ENCODE measurements at regions of chr1 and their contacts with region 1.

Region 1: DNA sequence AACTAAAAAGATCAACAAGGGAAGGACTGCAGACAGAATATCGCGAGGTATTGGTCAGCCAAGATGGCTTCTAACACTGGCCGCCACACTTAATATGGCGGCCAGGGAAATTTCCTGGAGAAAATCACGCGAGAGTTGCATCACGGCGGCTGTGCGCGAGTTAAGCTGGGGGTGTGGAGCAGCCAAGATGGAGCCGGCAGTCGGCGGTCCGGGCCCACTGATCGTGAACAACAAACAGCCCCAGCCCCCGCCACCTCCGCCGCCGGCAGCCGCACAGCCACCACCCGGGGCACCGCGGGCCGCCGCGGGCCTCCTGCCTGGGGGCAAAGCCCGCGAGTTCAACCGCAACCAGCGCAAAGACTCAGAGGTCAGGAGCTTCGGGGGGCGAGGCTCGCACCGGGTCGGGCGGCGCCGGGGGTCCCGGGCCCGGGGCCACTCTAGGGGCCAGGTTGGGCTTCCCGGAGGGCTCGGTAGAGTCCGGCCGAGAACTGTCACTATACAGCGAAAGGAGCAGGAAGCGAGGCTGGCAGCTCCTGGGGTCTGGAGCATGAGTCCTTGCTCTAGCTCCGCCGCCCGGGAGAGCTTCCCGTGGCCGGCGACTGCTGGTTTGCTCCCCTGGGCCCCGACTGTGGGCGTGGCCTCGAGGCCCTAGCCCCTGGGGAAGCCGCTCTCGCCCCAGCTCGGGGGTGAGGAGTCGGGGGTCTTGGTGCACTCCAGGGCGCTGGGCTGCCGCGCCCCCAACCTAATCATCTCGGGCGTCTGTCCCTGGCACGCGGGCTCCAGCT is at the start of gene STRIP1:
- DNase-seq: peak; percentile 78 to 96 (median 93)
- ATAC-seq: peak; percentile 97
- H3K4me3 ChIP-seq: peak within 1 kb of the TSS; percentile 48
- H3K4me3 Mint-ChIP-seq: peak within 1 kb of the TSS; percentile 92 to 98 (median 95)
- H3K27ac ChIP-seq: peak within 1 kb of the TSS; percentile 97
- H3K27ac Mint-ChIP-seq: peak within 1 kb of the TSS; percentile 81 to 98 (median 95)
- H3K4me1 ChIP-seq: peaks cover 31% of the 10 kb centered on the region in 2 donors
- H3K4me1 Mint-ChIP-seq: peaks cover 32 to 70% (median 57%) of the 10 kb centered on the region in 7 donors
- H3K27me3 ChIP-seq: no peaks in the 10 kb centered on the region
- H3K27me3 Mint-ChIP-seq: no peaks in the 10 kb centered on the region
- total RNA-seq, gene STRIP1: 42.4 to 83.9 (median 70.7) TPM

Region 2: GRCh38 chr1:109041621-109042468 is 992.8 kb before region 1 on chr1 and contains the start of gene WDR47:
- CTCF ChIA-PET with region 1: no interaction called
- POLR2A ChIA-PET with region 1: no interaction called
- intact Hi-C with region 1: loop called in 1 of 2 experiments (anchors 2 kb)
- DNase-seq: peak; percentile 95 to 97 (median 96)
- ATAC-seq: peak; percentile 99
- H3K4me3 ChIP-seq: peak within 1 kb of the TSS; percentile 97
- H3K4me3 Mint-ChIP-seq: peak within 1 kb of the TSS; percentile 86 to 97 (median 94)
- H3K27ac ChIP-seq: peak within 1 kb of the TSS; percentile 90
- H3K27ac Mint-ChIP-seq: peak within 1 kb of the TSS; percentile 78 to 97 (median 91)
- H3K4me1 ChIP-seq: peaks cover 0 to 7% of the 10 kb centered on the region in 2 donors
- H3K4me1 Mint-ChIP-seq: peaks cover 7 to 25% (median 16%) of the 10 kb centered on the region in 7 donors
- H3K27me3 ChIP-seq: no peaks in the 10 kb centered on the region
- H3K27me3 Mint-ChIP-seq: peaks cover 0 to 7% (median 0%) of the 10 kb centered on the region in 5 donors
- total RNA-seq, gene WDR47: 9.8 to 15.4 (median 14.4) TPM

Region 3: GRCh38 chr1:109493805-109494539 is 540.7 kb before region 1 on chr1 and contains the start of gene CYB561D1:
- CTCF ChIA-PET with region 1: no interaction called
- POLR2A ChIA-PET with region 1: no interaction called
- intact Hi-C with region 1: loop called in 1 of 2 experiments (anchors 2 kb)
- DNase-seq: peak; percentile 83 to 97 (median 91)
- ATAC-seq: peak; percentile 96
- H3K4me3 ChIP-seq: peak within 1 kb of the TSS; percentile 96
- H3K4me3 Mint-ChIP-seq: peak within 1 kb of the TSS; percentile 90 to 98 (median 94)
- H3K27ac ChIP-seq: peak within 1 kb of the TSS; percentile 72
- H3K27ac Mint-ChIP-seq: peak within 1 kb of the TSS; percentile 84 to 98 (median 92)
- H3K4me1 ChIP-seq: peaks cover 31 to 59% of the 10 kb centered on the region in 2 donors
- H3K4me1 Mint-ChIP-seq: peaks cover 40 to 59% (median 53%) of the 10 kb centered on the region in 7 donors
- H3K27me3 ChIP-seq: no peaks in the 10 kb centered on the region
- H3K27me3 Mint-ChIP-seq: no peaks in the 10 kb centered on the region
- total RNA-seq, gene CYB561D1: 19.6 to 41.5 (median 24.1) TPM

Region 4: DNA sequence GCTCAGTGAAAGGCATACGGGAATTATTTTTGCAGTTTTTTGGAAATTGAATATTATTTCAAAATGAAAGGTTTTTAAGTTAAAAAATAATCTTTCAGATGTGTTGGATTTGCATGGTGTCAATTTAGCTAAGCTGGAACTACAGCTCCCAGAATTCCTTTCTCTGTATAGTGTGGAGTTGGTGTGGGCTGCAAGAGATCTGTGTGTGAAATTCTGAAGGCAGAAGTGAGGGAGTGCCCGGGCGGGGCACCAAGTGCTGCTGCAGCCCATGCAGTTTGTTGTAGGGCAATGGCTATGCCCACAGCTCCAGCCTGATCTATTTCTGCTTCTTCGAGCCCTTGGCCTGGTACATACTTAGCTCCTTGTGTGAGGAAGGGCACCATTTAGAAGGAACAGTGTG is 184.4 kb before region 1 on chr1:
- CTCF ChIA-PET with region 1: no interaction called
- POLR2A ChIA-PET with region 1: no interaction called
- intact Hi-C with region 1: no loop called
- DNase-seq: no peak
- ATAC-seq: no peak
- H3K4me3 ChIP-seq: no peak overlapping the region
- H3K4me3 Mint-ChIP-seq: no peak overlapping the region
- H3K27ac ChIP-seq: no peak overlapping the region
- H3K27ac Mint-ChIP-seq: no peak overlapping the region
- H3K4me1 ChIP-seq: no peaks in the 10 kb centered on the region
- H3K4me1 Mint-ChIP-seq: peaks cover 0 to 3% (median 0%) of the 10 kb centered on the region in 7 donors
- H3K27me3 ChIP-seq: no peaks in the 10 kb centered on the region
- H3K27me3 Mint-ChIP-seq: no peaks in the 10 kb centered on the region

Region 5: GRCh38 chr1:110011527-110012041 is 23.1 kb before region 1 on chr1:
- CTCF ChIA-PET with region 1: no interaction called
- POLR2A ChIA-PET with region 1: no interaction called
- intact Hi-C with region 1: loop called in 1 of 2 experiments (anchors 2 kb)
- DNase-seq: peak in 6 of 9 donors; percentile 19 to 49 (median 38)
- ATAC-seq: peak; percentile 96
- H3K4me3 ChIP-seq: no peak overlapping the region
- H3K4me3 Mint-ChIP-seq: no peak overlapping the region
- H3K27ac ChIP-seq: no peak overlapping the region
- H3K27ac Mint-ChIP-seq: peak overlapping the region in 3 of 9 donors; percentile 17 to 73 (median 56)
- H3K4me1 ChIP-seq: no peaks in the 10 kb centered on the region
- H3K4me1 Mint-ChIP-seq: peaks cover 2 to 13% (median 4%) of the 10 kb centered on the region in 7 donors
- H3K27me3 ChIP-seq: no peaks in the 10 kb centered on the region
- H3K27me3 Mint-ChIP-seq: no peaks in the 10 kb centered on the region

Region 6: GRCh38 chr1:110060034-110060661 is 25.5 kb after region 1 on chr1:
- CTCF ChIA-PET with region 1: interaction called, 10 read pairs
- POLR2A ChIA-PET with region 1: interaction called, 4 read pairs
- intact Hi-C with region 1: loop called in 1 of 2 experiments (anchors 1 kb)
- DNase-seq: peak; percentile 36 to 79 (median 58)
- ATAC-seq: peak; percentile 86
- H3K4me3 ChIP-seq: no peak overlapping the region
- H3K4me3 Mint-ChIP-seq: no peak overlapping the region
- H3K27ac ChIP-seq: no peak overlapping the region
- H3K27ac Mint-ChIP-seq: no peak overlapping the region
- H3K4me1 ChIP-seq: no peaks in the 10 kb centered on the region
- H3K4me1 Mint-ChIP-seq: peaks cover 0 to 4% (median 0%) of the 10 kb centered on the region in 7 donors
- H3K27me3 ChIP-seq: no peaks in the 10 kb centered on the region
- H3K27me3 Mint-ChIP-seq: no peaks in the 10 kb centered on the region

Region 7: DNA sequence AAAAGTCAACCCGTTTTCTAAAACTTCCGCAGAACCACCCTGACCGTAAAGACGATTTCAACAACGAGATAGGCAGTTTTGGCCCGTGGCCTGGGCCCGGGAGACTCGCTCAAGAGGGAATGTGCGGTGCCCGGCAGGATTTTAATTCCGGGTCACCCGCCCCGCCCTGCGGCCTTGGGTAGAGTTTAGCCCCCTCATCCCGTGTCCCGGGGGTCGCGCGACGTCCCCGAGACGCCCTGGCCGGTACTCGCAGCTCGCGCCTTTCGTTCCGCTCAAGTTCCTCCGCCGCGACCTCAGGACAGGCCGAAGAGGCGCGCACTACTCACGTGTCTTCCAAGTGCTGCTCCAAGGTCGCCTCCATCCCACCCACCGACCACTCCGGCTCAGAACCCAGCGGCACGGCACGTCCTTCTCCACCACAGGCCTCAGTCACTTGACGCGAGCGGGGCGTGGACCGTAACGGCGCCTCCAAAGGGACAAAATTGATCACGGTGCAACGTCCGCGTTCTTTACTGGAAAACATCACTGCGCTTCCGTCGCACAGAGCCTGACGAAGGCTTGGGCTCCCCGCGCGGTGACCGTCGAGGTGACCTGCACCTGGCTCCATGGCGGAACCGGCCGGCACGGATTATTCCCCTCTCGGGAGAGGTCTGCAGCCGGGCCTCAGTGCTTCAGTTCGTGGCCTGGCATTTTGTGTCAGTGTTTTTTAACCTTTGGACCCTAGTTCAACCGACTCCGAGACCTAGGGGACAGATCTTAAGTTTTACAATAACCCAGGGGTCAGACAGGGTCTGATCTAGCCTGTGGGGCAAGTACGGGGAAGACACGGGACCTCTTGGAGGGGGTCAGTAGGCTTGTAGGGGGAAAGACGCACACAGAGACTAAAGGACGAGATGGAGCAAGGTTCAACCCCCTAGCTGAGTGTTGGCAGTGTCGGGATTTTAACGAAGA is 372.9 kb after region 1 on chr1 and contains the start of gene LAMTOR5:
- CTCF ChIA-PET with region 1: no interaction called
- POLR2A ChIA-PET with region 1: no interaction called
- intact Hi-C with region 1: loop called (anchors 1 to 5 kb)
- DNase-seq: peak; percentile 77 to 91 (median 89)
- ATAC-seq: peak; percentile 98
- H3K4me3 ChIP-seq: peak within 1 kb of the TSS; percentile 95
- H3K4me3 Mint-ChIP-seq: peak within 1 kb of the TSS; percentile 88 to 100 (median 99)
- H3K27ac ChIP-seq: peak within 1 kb of the TSS; percentile 92
- H3K27ac Mint-ChIP-seq: peak within 1 kb of the TSS; percentile 96 to 100 (median 99)
- H3K4me1 ChIP-seq: peaks cover 19% of the 10 kb centered on the region in 2 donors
- H3K4me1 Mint-ChIP-seq: peaks cover 9 to 39% (median 27%) of the 10 kb centered on the region in 7 donors
- H3K27me3 ChIP-seq: no peaks in the 10 kb centered on the region
- H3K27me3 Mint-ChIP-seq: no peaks in the 10 kb centered on the region
- total RNA-seq, gene LAMTOR5: 63.3 to 146 (median 69.4) TPM

Region 8: DNA sequence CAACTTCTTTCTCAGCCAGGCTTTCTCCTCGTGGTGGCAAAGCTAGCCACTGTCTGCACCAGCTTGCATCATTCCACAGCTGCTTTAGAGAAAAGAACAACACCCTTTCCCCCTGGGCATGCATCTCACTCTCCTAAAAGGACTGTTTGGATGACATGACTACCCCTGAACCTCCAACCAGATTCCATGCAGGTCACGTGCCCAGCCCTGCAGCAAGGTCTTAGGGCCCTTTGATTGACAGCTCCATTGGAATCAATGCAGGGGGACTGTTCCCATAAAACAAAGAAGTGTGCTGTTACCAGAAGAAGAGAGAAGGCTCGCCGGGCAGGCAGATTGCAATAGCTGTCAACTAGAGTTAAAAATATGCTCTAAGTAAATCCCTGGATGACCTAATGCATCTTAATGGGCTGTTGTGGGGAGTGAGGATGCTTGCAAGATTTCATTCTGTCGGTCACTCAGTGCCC is 547.1 kb after region 1 on chr1:
- CTCF ChIA-PET with region 1: no interaction called
- POLR2A ChIA-PET with region 1: no interaction called
- intact Hi-C with region 1: no loop called
- DNase-seq: no peak
- ATAC-seq: no peak
- H3K4me3 ChIP-seq: no peak overlapping the region
- H3K4me3 Mint-ChIP-seq: no peak overlapping the region
- H3K27ac ChIP-seq: no peak overlapping the region
- H3K27ac Mint-ChIP-seq: no peak overlapping the region
- H3K4me1 ChIP-seq: no peaks in the 10 kb centered on the region
- H3K4me1 Mint-ChIP-seq: no peaks in the 10 kb centered on the region
- H3K27me3 ChIP-seq: no peaks in the 10 kb centered on the region
- H3K27me3 Mint-ChIP-seq: peaks cover 13 to 25% (median 19%) of the 10 kb centered on the region in 5 donors

Region 9: GRCh38 chr1:111448918-111449702 is 1414.5 kb after region 1 on chr1 and contains the starts of genes ATP5PB and WDR77:
- CTCF ChIA-PET with region 1: no interaction called
- POLR2A ChIA-PET with region 1: no interaction called
- intact Hi-C with region 1: loop called in 1 of 2 experiments (anchors 10 kb)
- DNase-seq: peak; percentile 66 to 97 (median 94)
- ATAC-seq: peak; percentile 98
- H3K4me3 ChIP-seq: peak within 1 kb of the TSS; percentile 89
- H3K4me3 Mint-ChIP-seq: peak within 1 kb of the TSS; percentile 97 to 100 (median 100)
- H3K27ac ChIP-seq: peak within 1 kb of the TSS; percentile 98
- H3K27ac Mint-ChIP-seq: peak within 1 kb of the TSS; percentile 95 to 100 (median 99)
- H3K4me1 ChIP-seq: peaks cover 51 to 55% of the 10 kb centered on the region in 2 donors
- H3K4me1 Mint-ChIP-seq: peaks cover 43 to 92% (median 78%) of the 10 kb centered on the region in 7 donors
- H3K27me3 ChIP-seq: no peaks in the 10 kb centered on the region
- H3K27me3 Mint-ChIP-seq: no peaks in the 10 kb centered on the region
- total RNA-seq, gene ATP5PB: 64.9 to 298 (median 98.7) TPM
- total RNA-seq, gene WDR77: 20.7 to 39.9 (median 29.5) TPM

Measured in naive thymus-derived CD4-positive, alpha-beta T cell (primary cell).